Ascending aorta (tissue), 2 donors: ENCODE measurements at regions of chr11 and their contacts with region 1.

Region 1: DNA sequence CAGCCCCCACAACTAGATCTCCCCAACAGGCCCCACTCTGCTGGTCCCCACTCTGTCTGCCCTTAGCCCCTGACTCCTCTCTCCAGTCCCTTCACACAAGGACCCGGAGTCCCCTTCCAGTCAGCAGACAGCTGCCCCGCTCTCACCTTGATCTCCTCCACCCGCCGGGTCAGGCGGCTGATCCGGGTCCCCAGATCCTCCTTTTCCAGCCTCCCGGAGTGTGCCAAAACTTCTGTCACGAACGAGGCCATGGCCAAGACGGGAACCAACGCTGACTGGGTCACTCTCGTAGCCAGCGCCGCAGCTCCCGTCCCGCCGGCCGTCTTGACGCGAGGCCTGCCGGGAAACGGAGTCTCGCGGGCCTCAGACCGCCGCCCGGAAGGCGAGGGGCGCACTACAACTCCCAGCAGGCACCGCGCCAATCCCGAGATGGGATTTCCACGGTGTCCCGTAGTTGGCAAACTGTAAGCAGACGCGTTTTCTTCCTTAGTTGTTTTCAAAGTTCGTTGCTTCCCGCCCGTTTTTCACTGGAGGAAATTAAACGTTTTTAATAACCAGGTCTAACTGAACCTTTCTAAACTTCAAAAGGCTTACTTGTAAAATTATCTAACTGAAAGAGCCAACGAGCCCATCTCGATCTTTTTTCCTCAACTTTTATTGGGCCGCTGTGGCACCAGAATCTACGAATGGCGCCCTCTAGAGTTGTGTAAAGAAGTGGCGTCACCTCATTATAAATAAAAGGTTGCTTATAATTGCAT is at the start of gene ZW10:
- DNase-seq: peak; percentile 82 to 98
- H3K4me3 ChIP-seq: peak within 1 kb of the TSS; percentile 89 to 96
- H3K27ac ChIP-seq: peak within 1 kb of the TSS; percentile 84 to 85
- H3K4me1 ChIP-seq: peaks cover 0 to 15% of the 10 kb centered on the region in 2 donors
- H3K27me3 ChIP-seq: no peaks in the 10 kb centered on the region
- CTCF ChIP-seq: peak; percentile 55 to 86 (median 82)
- total RNA-seq, gene ZW10: 12.3 TPM

Region 2: GRCh38 chr11:113593698-113594308 is 179.8 kb before region 1 on chr11:
- intact Hi-C with region 1: no loop called
- DNase-seq: peak in 1 of 2 donors; percentile 74
- H3K4me3 ChIP-seq: peak overlapping the region in 1 of 2 donors; percentile 24
- H3K27ac ChIP-seq: no peak overlapping the region
- H3K4me1 ChIP-seq: no peaks in the 10 kb centered on the region
- H3K27me3 ChIP-seq: no peaks in the 10 kb centered on the region
- CTCF ChIP-seq: no peak

Region 3: DNA sequence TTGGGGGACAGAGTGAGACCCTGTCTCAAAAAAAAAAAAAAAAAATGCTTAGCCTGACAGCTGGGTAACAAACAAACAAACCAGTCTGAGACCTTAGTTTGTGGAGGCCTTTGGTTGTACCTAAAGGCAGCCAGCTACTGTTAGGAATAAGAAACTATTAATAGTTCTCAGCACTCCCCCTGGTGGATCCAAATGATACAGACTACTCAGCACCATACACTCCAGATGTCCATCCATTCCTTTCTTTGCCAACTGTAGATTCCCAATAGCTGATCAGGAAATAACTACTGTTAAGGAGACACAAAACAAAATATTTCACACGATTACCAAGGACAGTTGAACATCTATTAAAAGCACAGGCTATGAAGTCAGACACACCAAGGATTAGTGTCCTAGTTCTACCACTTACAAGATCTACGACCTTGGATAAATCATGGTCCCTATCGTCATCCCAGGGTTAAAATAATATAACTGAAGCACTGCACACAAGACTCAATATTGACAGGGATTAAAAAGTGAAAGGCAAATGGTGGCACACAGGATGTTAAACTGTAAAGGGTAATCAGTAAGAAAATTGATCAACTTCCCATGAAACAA is 23.2 kb after region 1 on chr11:
- intact Hi-C with region 1: loop called (anchors 1 kb)
- DNase-seq: no peak
- H3K4me3 ChIP-seq: no peak overlapping the region
- H3K27ac ChIP-seq: no peak overlapping the region
- H3K4me1 ChIP-seq: no peaks in the 10 kb centered on the region
- H3K27me3 ChIP-seq: no peaks in the 10 kb centered on the region
- CTCF ChIP-seq: peak; percentile 23 to 69 (median 54)

Region 4: DNA sequence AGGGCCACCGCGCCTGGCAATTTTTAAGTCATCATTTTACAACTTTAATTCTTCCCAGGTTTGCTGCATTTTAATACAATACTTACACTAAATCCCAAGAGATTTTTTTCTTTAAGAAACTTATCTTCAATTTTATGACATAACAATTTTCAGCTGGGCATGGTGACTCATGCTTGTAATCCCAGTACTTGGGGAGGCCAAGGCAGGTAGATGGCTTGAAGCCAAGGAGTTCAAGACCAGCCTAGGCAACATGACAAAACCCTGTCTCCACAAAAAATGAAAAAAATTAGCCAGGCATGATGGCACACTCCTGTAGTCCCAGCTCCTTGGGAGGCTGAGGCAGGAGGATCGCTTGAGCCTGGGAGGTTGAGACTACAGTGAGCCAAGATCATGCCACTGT is 44.8 kb after region 1 on chr11:
- intact Hi-C with region 1: no loop called
- DNase-seq: no peak
- H3K4me3 ChIP-seq: no peak overlapping the region
- H3K27ac ChIP-seq: no peak overlapping the region
- H3K4me1 ChIP-seq: no peaks in the 10 kb centered on the region
- H3K27me3 ChIP-seq: no peaks in the 10 kb centered on the region
- CTCF ChIP-seq: no peak

Region 5: DNA sequence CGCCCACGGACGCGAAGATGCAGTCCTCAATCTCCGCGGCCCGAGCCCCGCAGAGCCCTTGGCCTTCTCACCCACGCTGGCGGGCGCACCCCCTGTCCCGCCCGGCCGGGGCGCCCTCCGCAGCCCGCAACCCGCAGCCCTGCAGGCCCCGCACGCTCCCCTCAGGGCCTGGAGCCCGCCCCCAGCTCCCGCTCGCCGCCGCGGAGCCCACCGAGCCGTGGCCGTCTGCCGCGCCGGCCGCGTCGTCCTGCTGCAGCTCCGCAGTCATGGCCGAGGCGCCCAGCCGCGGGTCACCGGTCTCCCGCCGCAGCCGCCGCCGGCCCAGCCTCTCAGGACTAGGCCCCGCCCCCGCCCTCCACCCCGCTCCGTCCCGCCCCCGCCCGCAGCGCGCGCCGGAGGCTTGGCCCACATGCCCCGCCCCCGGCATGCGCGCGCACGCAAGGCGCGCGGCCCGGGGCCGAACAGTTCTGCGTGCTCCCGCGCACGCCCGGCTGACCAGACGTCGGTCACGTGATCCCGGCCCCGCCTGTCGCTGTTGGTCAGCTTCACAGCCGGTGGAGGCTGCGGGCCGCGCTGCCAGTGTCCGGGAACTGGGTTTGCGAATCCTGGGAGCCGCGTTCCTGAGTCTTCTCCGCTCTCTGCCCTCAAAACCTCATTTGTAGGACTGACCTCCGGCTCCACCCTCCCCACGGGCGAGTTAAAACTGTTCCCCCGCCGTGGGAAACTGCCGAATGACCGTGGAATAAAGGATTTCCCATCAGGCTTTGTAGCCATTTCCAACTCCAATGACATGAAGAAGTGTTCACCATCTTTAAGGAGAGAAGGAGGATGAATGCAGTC is 101.9 kb after region 1 on chr11 and contains the start of gene USP28:
- intact Hi-C with region 1: loop called (anchors 2 kb)
- DNase-seq: peak; percentile 92 to 98
- H3K4me3 ChIP-seq: peak within 1 kb of the TSS; percentile 87 to 100
- H3K27ac ChIP-seq: peak within 1 kb of the TSS; percentile 90
- H3K4me1 ChIP-seq: peaks cover 0 to 18% of the 10 kb centered on the region in 2 donors
- H3K27me3 ChIP-seq: no peaks in the 10 kb centered on the region
- CTCF ChIP-seq: peak in 1 of 3 experiments; percentile 25
- total RNA-seq, gene USP28: 2.9 TPM